Endothelial cell of umbilical vein (primary cell): ENCODE measurements at regions of chr1 and their contacts with region 1.

Region 1: GRCh38 chr1:165827268-165828102 is at the start of gene UCK2:
- DNase-seq: peak; percentile 81
- H3K4me3 ChIP-seq: peak within 1 kb of the TSS; percentile 77 to 93 (median 86)
- H3K27ac ChIP-seq: peak within 1 kb of the TSS; percentile 95
- H3K4me1 ChIP-seq: peaks cover 13% of the 10 kb centered on the region
- H3K27me3 ChIP-seq: no peaks in the 10 kb centered on the region
- CTCF ChIP-seq: peak in 1 of 2 donors; percentile 29
- POLR2A ChIP-seq: peak; percentile 49
- total RNA-seq, gene UCK2: 62.3 and 68.4 TPM in 2 replicates

Region 2: DNA sequence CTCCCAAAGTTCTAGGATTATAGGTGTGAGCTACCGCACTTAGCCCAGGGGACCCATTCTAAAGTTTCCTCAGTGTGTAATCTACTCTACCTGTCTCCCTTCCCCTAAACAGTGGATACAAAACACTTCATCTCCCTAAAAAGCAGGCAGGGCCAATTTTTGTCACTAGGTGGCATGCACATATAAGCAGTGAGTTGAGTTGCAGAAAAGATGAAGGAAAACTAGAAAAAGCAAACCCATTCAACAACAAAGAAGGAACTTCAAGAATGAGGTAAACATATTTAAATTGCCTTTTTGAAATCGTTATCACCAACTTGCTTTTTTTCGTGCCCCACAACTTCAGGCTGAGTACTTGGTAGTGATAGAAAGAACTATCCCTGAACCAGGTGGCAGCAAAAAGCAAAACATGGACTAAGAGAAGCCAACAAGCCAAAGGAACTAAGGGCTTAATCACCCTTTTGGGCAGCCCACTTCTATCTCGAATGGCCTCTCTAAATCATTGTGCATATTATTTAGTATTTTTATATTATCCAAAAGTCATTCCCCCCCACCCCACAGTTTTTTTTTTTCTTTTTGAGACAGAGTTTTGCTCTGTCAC is 109.5 kb before region 1 on chr1:
- CTCF ChIA-PET with region 1: no interaction called
- POLR2A ChIA-PET with region 1: no interaction called
- dilution Hi-C with region 1: no loop called
- intact Hi-C with region 1: loop called (anchors 1 kb)
- DNase-seq: peak; percentile 68
- H3K4me3 ChIP-seq: no peak overlapping the region
- H3K27ac ChIP-seq: no peak overlapping the region
- H3K4me1 ChIP-seq: no peaks in the 10 kb centered on the region
- H3K27me3 ChIP-seq: no peaks in the 10 kb centered on the region
- CTCF ChIP-seq: peak; percentile 52 to 70
- POLR2A ChIP-seq: no peak

Region 3: GRCh38 chr1:165747632-165748447 is 79.6 kb before region 1 on chr1:
- CTCF ChIA-PET with region 1: no interaction called
- POLR2A ChIA-PET with region 1: no interaction called
- dilution Hi-C with region 1: no loop called
- intact Hi-C with region 1: no loop called
- DNase-seq: no peak
- H3K4me3 ChIP-seq: no peak overlapping the region
- H3K27ac ChIP-seq: no peak overlapping the region
- H3K4me1 ChIP-seq: no peaks in the 10 kb centered on the region
- H3K27me3 ChIP-seq: no peaks in the 10 kb centered on the region
- CTCF ChIP-seq: no peak
- POLR2A ChIP-seq: no peak

Region 4: DNA sequence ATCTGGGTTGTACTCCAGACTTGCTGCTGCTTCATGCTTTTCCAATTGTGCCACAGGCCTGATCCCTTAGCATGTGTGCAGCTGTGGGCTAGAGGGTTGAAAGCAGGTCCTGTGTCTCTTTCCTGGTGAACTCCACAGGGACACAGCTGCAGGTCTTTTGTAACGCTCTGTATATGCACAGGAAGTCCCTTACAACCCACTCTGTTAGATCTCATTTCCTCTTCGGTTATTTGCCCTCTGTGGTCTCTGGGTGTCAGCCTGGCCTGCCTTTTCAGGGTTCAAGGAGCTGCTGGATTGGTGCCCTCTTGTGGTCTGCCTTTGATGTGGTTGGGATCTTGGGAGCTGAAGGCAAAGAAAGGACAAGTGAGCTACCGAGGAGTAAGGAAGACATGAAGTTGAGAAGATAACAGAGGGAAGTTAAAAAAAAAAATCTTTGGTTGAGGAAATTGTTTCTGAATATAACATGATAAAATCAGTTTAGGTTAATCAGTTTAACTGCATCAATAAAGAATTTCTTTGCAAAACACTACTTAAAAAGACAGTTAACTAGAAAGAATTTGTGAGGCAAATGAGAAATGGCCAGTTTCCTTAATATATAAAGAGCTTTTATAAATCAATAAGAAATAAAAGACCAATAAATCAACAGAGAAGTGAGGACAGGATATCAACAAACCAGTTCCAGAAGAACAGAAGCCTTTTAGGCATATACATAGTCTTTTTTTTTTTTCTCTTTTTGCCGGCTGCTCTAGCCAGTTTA is 44.0 kb after region 1 on chr1:
- CTCF ChIA-PET with region 1: interaction called, 13 read pairs
- POLR2A ChIA-PET with region 1: no interaction called
- dilution Hi-C with region 1: no loop called
- intact Hi-C with region 1: loop called (anchors 1 kb)
- DNase-seq: peak; percentile 54
- H3K4me3 ChIP-seq: no peak overlapping the region
- H3K27ac ChIP-seq: peak overlapping the region; percentile 21
- H3K4me1 ChIP-seq: peaks cover 10% of the 10 kb centered on the region
- H3K27me3 ChIP-seq: no peaks in the 10 kb centered on the region
- CTCF ChIP-seq: peak; percentile 44 to 45
- POLR2A ChIP-seq: no peak

Region 5: DNA sequence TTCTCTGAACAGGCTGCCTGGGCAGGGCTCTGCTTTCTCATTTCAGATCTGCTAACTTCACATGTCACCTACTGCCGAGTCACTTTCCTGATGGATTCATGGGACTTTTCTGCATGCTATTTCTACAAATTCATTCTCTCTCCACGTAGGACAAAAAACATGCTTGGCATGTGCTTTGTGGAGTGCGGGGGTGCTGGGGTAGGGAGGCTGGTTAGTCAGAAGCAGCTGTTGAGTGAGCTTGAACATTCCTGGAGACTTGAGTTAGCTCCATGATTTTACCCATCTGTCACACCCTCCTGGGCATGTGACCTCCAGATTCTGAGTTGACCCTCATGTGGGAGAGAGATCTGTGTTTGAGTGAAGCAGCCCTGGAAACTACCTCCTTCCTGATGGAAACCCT is 71.4 kb after region 1 on chr1:
- CTCF ChIA-PET with region 1: interaction called, 12 read pairs
- POLR2A ChIA-PET with region 1: interaction called, 9 read pairs
- dilution Hi-C with region 1: no loop called
- intact Hi-C with region 1: loop called (anchors 1 kb)
- DNase-seq: peak; percentile 70
- H3K4me3 ChIP-seq: no peak overlapping the region
- H3K27ac ChIP-seq: peak overlapping the region; percentile 98
- H3K4me1 ChIP-seq: peaks cover 83% of the 10 kb centered on the region
- H3K27me3 ChIP-seq: no peaks in the 10 kb centered on the region
- CTCF ChIP-seq: no peak
- POLR2A ChIP-seq: no peak